Activated B cell treated with CpG ODN at 0.5 μM for 24 hours (primary cell): ENCODE measurements at regions of chr13 and their contacts with region 1.

Region 1: DNA sequence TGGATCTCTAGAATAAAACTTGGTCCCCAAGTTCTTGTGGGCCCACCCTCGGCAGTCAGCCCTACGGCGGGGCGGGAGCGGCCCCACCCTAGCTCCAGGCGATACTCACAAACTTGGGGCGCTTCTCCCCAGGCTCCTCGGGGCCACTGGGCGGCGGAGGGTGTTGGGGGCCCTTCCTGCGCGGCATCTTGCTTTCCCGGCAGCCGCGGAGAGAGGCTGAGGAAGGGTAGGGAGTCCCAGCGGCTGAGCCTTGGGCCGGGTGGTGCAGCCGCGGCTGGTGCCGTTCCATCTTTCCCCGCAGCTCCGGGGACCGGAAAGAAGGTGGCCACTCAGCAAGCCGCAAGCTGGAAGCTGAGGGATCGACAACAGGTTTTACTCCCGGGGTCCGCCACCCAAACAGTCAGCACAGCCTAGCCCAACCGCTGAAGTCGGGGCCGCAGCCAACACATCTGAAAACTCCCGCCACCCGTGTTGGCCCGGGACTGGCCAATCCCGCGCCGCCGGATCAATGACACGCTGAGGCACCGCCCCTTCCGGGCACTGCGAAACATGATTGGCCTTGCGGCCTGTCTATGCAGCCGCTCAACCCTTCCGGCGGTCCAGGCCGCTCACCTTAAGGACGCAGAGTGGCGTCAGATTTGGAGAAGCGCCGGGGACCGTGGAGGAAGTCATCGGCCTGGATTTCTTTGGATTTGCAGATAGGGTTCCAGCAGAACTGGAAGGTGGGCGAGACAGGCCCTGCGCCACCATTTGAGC is at the start of gene DIAPH3:
- DNase-seq: peak; percentile 90
- ATAC-seq: peak; percentile 100
- H3K4me3 Mint-ChIP-seq: peak within 1 kb of the TSS; percentile 94
- H3K27ac Mint-ChIP-seq: peak within 1 kb of the TSS; percentile 87
- H3K4me1 Mint-ChIP-seq: peaks cover 25% of the 10 kb centered on the region
- H3K27me3 Mint-ChIP-seq: no peaks in the 10 kb centered on the region
- CTCF ChIP-seq: no peak
- total RNA-seq, gene DIAPH3: 0.38 and 0.66 TPM in 2 replicates

Region 2: DNA sequence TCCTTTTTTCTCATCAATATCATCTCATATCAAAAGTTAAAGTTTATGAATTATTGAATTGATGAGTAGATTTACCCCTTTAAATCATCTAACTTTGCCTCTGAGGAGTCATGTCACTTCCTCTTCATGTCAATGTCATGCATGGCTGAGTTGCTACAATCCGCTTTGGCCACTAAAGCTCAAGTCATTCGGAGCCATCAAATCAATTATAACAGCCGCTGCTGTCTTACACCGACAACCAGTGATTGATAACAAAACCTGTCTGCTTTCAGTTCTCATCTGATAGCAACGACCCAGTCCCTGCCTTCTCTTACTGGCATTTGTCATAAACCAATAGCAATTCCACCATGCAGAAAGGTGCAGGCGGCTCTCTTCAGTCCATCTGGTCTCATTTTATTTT is 429.3 kb before region 1 on chr13:
- CTCF ChIA-PET with region 1: no interaction called
- POLR2A ChIA-PET with region 1: no interaction called
- intact Hi-C with region 1: loop called (anchors 10 kb)
- DNase-seq: no peak
- ATAC-seq: peak; percentile 91
- H3K4me3 Mint-ChIP-seq: peak overlapping the region; percentile 25
- H3K27ac Mint-ChIP-seq: peak overlapping the region; percentile 25
- H3K4me1 Mint-ChIP-seq: peaks cover 3% of the 10 kb centered on the region
- H3K27me3 Mint-ChIP-seq: no peaks in the 10 kb centered on the region
- CTCF ChIP-seq: no peak

Region 3: DNA sequence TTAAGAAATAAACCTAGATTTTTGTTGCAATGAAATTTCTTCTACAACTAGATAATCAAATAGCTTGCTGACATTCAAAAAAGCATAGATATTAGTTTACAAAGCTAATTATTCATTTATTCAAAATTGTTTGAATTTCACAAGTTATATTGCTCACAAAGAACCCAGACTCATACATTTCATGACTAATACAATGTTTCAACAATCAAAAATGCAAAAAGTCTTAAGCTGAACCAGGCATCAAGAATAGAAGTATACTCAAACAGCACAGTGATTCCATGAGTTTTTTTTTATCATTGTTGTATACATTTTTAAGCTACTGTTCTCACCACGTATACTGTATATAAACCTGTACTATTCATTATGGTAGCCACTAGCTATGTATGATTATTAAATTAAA is 50.9 kb before region 1 on chr13:
- CTCF ChIA-PET with region 1: no interaction called
- POLR2A ChIA-PET with region 1: no interaction called
- intact Hi-C with region 1: no loop called
- DNase-seq: no peak
- ATAC-seq: no peak
- H3K4me3 Mint-ChIP-seq: no peak overlapping the region
- H3K27ac Mint-ChIP-seq: no peak overlapping the region
- H3K4me1 Mint-ChIP-seq: no peaks in the 10 kb centered on the region
- H3K27me3 Mint-ChIP-seq: no peaks in the 10 kb centered on the region
- CTCF ChIP-seq: no peak

Region 4: GRCh38 chr13:60267498-60268198 is 104.0 kb after region 1 on chr13:
- CTCF ChIA-PET with region 1: no interaction called
- POLR2A ChIA-PET with region 1: no interaction called
- intact Hi-C with region 1: loop called (anchors 5 kb)
- DNase-seq: no peak
- ATAC-seq: peak; percentile 62
- H3K4me3 Mint-ChIP-seq: no peak overlapping the region
- H3K27ac Mint-ChIP-seq: no peak overlapping the region
- H3K4me1 Mint-ChIP-seq: no peaks in the 10 kb centered on the region
- H3K27me3 Mint-ChIP-seq: no peaks in the 10 kb centered on the region
- CTCF ChIP-seq: no peak

Region 5: DNA sequence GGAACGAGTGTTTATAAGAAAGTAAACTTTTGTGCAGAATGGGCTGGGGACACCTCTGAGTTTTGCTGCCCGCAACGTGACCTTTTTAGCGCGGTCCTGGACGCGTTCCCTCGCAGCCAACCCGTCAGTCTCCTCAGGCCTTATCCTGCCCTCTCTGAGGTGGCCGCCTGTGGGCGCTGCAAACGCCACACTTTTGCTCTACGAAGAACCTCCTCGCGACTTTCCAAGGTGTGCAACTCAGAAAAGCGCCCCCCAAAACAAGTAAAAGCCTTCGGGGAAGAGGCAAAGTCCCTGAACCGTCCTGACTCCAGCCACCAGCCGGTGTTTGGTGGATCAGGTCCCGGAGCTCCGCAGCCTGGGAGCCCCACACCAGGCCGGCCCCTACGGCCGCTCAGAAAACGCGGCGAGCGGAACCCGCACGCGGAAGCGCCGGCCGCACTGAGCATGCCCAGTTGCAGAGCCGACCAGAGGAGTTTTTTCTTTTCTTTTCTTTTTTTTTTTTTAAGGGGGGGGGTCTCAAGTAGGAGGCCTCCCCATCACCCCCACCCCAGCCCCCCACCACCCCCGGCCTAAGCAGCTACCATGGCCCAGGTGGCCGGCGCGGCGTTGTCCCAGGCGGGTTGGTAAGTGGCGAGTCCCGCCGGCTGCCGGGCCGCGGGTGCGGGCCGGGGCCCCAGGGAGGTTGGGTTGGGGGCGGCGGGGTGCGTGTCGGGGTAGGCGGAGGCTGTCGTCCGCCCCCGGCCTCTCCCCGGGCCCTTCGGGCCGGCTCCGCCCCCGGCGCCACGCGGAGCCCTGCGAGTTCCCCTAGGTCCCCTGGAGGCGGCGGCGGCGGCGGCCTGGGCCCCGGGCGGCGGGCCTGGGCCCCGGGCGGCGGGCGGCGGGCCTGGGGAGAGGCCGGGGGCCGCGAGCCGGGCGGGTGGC is 233.4 kb after region 1 on chr13 and contains the start of gene TDRD3:
- CTCF ChIA-PET with region 1: no interaction called
- POLR2A ChIA-PET with region 1: interaction called, 5 read pairs
- intact Hi-C with region 1: loop called (anchors 1 kb)
- DNase-seq: peak; percentile 83
- ATAC-seq: peak; percentile 68
- H3K4me3 Mint-ChIP-seq: peak within 1 kb of the TSS; percentile 95
- H3K27ac Mint-ChIP-seq: peak within 1 kb of the TSS; percentile 97
- H3K4me1 Mint-ChIP-seq: peaks cover 31% of the 10 kb centered on the region
- H3K27me3 Mint-ChIP-seq: no peaks in the 10 kb centered on the region
- CTCF ChIP-seq: peak; percentile 24
- total RNA-seq, gene TDRD3: 19.7 and 22.5 TPM in 2 replicates

Region 6: GRCh38 chr13:60590800-60591747 is 427.4 kb after region 1 on chr13:
- CTCF ChIA-PET with region 1: no interaction called
- POLR2A ChIA-PET with region 1: no interaction called
- intact Hi-C with region 1: no loop called
- DNase-seq: no peak
- ATAC-seq: no peak
- H3K4me3 Mint-ChIP-seq: no peak overlapping the region
- H3K27ac Mint-ChIP-seq: no peak overlapping the region
- H3K4me1 Mint-ChIP-seq: no peaks in the 10 kb centered on the region
- H3K27me3 Mint-ChIP-seq: no peaks in the 10 kb centered on the region
- CTCF ChIP-seq: no peak